B cell (primary cell): ENCODE measurements at regions of chr13 and their contacts with region 1.

Region 1: GRCh38 chr13:73754727-73755292 is 379.4 kb downstream of the KLF12 start:
- DNase-seq: peak; percentile 70
- ATAC-seq: no peak
- H3K4me3 ChIP-seq: no peak overlapping the region
- H3K4me3 Mint-ChIP-seq: no peak overlapping the region
- H3K27ac ChIP-seq: no peak overlapping the region
- H3K27ac Mint-ChIP-seq: peak overlapping the region; percentile 23
- H3K4me1 ChIP-seq: no peaks in the 10 kb centered on the region
- H3K4me1 Mint-ChIP-seq: peaks cover 2% of the 10 kb centered on the region
- H3K27me3 ChIP-seq: no peaks in the 10 kb centered on the region
- H3K27me3 Mint-ChIP-seq: no peaks in the 10 kb centered on the region
- CTCF ChIP-seq: peak; percentile 89

Region 2: GRCh38 chr13:73596382-73596781 is 158.4 kb before region 1 on chr13:
- CTCF ChIA-PET with region 1: no interaction called
- POLR2A ChIA-PET with region 1: no interaction called
- intact Hi-C with region 1: no loop called
- DNase-seq: no peak
- ATAC-seq: no peak
- H3K4me3 ChIP-seq: no peak overlapping the region
- H3K4me3 Mint-ChIP-seq: no peak overlapping the region
- H3K27ac ChIP-seq: no peak overlapping the region
- H3K27ac Mint-ChIP-seq: no peak overlapping the region
- H3K4me1 ChIP-seq: no peaks in the 10 kb centered on the region
- H3K4me1 Mint-ChIP-seq: no peaks in the 10 kb centered on the region
- H3K27me3 ChIP-seq: no peaks in the 10 kb centered on the region
- H3K27me3 Mint-ChIP-seq: no peaks in the 10 kb centered on the region
- CTCF ChIP-seq: no peak

Region 3: GRCh38 chr13:73765651-73766384 is 11.0 kb after region 1 on chr13:
- CTCF ChIA-PET with region 1: interaction called, 62 read pairs
- POLR2A ChIA-PET with region 1: no interaction called
- intact Hi-C with region 1: loop called (anchors 1 kb)
- DNase-seq: peak; percentile 65
- ATAC-seq: peak; percentile 79
- H3K4me3 ChIP-seq: peak overlapping the region in 4 of 5 experiments; percentile 0 to 43 (median 16)
- H3K4me3 Mint-ChIP-seq: peak overlapping the region; percentile 78
- H3K27ac ChIP-seq: peak overlapping the region; percentile 83 to 92
- H3K27ac Mint-ChIP-seq: peak overlapping the region; percentile 94
- H3K4me1 ChIP-seq: peaks cover 51 to 60% of the 10 kb centered on the region in 2 donors
- H3K4me1 Mint-ChIP-seq: peaks cover 71% of the 10 kb centered on the region
- H3K27me3 ChIP-seq: no peaks in the 10 kb centered on the region
- H3K27me3 Mint-ChIP-seq: no peaks in the 10 kb centered on the region
- CTCF ChIP-seq: no peak

Region 4: DNA sequence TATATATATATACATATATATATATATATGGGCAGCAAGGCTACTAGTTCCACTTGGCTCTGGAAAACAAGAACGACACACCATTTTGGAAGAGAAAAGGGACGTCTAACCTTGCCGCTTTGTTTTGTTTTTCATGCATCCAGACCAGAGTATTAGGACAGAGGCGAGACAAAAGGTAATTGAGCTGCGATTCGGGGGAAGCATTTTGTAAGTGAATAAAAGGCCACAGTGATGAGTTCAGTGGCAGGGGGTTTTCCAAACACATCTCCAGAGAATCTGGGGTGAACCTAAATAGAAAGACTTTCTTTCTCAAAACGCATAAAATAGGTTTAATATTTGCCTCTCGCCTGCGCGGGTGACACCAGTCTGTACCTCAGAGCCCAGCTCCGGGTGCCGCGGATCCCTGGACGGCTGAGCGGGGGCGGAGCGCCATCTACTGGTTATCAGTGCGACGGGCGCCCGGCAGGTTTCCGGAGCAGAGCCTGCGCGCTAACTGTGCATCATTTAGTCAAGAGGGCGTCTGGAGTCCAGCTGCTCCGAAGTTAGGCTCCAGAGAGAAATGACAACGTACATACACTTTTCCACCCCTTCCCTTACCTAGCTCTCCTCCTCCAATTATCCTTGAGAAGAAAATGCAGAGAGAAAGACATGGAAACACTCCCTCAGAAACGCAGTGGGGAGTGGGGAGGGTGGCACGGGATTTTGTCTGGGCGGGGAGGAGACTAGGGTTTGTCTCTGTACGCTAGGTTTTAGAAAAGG is 1464.8 kb after region 1 on chr13:
- CTCF ChIA-PET with region 1: interaction called, 9 read pairs
- POLR2A ChIA-PET with region 1: no interaction called
- intact Hi-C with region 1: loop called (anchors 1 kb)
- DNase-seq: peak; percentile 71
- ATAC-seq: peak; percentile 76
- H3K4me3 ChIP-seq: no peak overlapping the region
- H3K4me3 Mint-ChIP-seq: peak overlapping the region; percentile 18
- H3K27ac ChIP-seq: no peak overlapping the region
- H3K27ac Mint-ChIP-seq: no peak overlapping the region
- H3K4me1 ChIP-seq: peaks cover 0 to 5% of the 10 kb centered on the region in 2 donors
- H3K4me1 Mint-ChIP-seq: peaks cover 6% of the 10 kb centered on the region
- H3K27me3 ChIP-seq: peaks cover 0 to 9% (median 5%) of the 10 kb centered on the region in 4 experiments
- H3K27me3 Mint-ChIP-seq: peaks cover 38% of the 10 kb centered on the region
- CTCF ChIP-seq: peak; percentile 96

Region 5: GRCh38 chr13:75357576-75358289 is 1602.9 kb after region 1 on chr13:
- CTCF ChIA-PET with region 1: interaction called, 6 read pairs
- POLR2A ChIA-PET with region 1: no interaction called
- intact Hi-C with region 1: loop called (anchors 10 kb)
- DNase-seq: peak; percentile 41
- ATAC-seq: peak; percentile 81
- H3K4me3 ChIP-seq: no peak overlapping the region
- H3K4me3 Mint-ChIP-seq: no peak overlapping the region
- H3K27ac ChIP-seq: no peak overlapping the region
- H3K27ac Mint-ChIP-seq: no peak overlapping the region
- H3K4me1 ChIP-seq: no peaks in the 10 kb centered on the region
- H3K4me1 Mint-ChIP-seq: no peaks in the 10 kb centered on the region
- H3K27me3 ChIP-seq: no peaks in the 10 kb centered on the region
- H3K27me3 Mint-ChIP-seq: no peaks in the 10 kb centered on the region
- CTCF ChIP-seq: peak; percentile 67